T-cell (primary cell): ENCODE measurements at regions of chr17 and their contacts with region 1.

Region 1: DNA sequence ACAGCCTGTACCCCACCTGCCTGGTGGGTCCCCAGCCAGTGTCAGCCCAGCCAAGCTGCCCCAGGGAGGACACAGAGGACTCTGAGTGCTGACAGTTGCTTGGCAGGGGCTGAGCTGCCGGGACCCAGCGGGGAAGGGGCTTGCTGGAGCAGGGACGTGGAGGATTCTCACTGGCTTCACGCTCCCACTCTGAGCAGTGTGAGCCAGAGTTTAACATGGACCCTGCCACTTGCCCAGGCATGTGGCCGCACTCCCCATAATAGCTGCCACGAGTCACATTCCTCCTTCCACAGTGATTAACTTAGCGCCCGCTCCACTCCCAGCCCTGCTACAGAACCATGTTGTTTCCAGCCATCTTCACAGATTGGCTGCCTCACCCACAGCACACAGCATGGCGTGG is 31.2 kb downstream of the SREBF1 start:
- DNase-seq: no peak
- ATAC-seq: no peak
- H3K4me3 ChIP-seq: no peak overlapping the region
- H3K4me3 Mint-ChIP-seq: no peak overlapping the region
- H3K27ac ChIP-seq: no peak overlapping the region
- H3K27ac Mint-ChIP-seq: no peak overlapping the region
- H3K4me1 ChIP-seq: peaks cover 0 to 7% of the 10 kb centered on the region in 2 experiments
- H3K4me1 Mint-ChIP-seq: peaks cover 0 to 4% (median 3%) of the 10 kb centered on the region in 3 donors
- H3K27me3 ChIP-seq: no peaks in the 10 kb centered on the region
- H3K27me3 Mint-ChIP-seq: no peaks in the 10 kb centered on the region

Region 2: GRCh38 chr17:17515934-17516930 is 289.3 kb before region 1 on chr17:
- CTCF ChIA-PET with region 1: no interaction called
- POLR2A ChIA-PET with region 1: no interaction called
- DNase-seq: no peak
- ATAC-seq: no peak
- H3K4me3 ChIP-seq: no peak overlapping the region
- H3K4me3 Mint-ChIP-seq: no peak overlapping the region
- H3K27ac ChIP-seq: no peak overlapping the region
- H3K27ac Mint-ChIP-seq: no peak overlapping the region
- H3K4me1 ChIP-seq: no peaks in the 10 kb centered on the region
- H3K4me1 Mint-ChIP-seq: no peaks in the 10 kb centered on the region
- H3K27me3 ChIP-seq: no peaks in the 10 kb centered on the region
- H3K27me3 Mint-ChIP-seq: no peaks in the 10 kb centered on the region

Region 3: GRCh38 chr17:17781591-17782496 is 23.7 kb before region 1 on chr17:
- CTCF ChIA-PET with region 1: no interaction called
- POLR2A ChIA-PET with region 1: no interaction called
- DNase-seq: peak in 23 of 35 experiments; percentile 18 to 67 (median 35)
- ATAC-seq: peak; percentile 13 to 52 (median 22)
- H3K4me3 ChIP-seq: peak overlapping the region; percentile 33 to 39
- H3K4me3 Mint-ChIP-seq: peak overlapping the region; percentile 57 to 91 (median 63)
- H3K27ac ChIP-seq: no peak overlapping the region
- H3K27ac Mint-ChIP-seq: no peak overlapping the region
- H3K4me1 ChIP-seq: peaks cover 12 to 41% of the 10 kb centered on the region in 2 experiments
- H3K4me1 Mint-ChIP-seq: peaks cover 25 to 28% (median 27%) of the 10 kb centered on the region in 3 donors
- H3K27me3 ChIP-seq: peaks cover 0 to 21% of the 10 kb centered on the region in 2 experiments
- H3K27me3 Mint-ChIP-seq: peaks cover 0 to 3% of the 10 kb centered on the region in 2 donors

Region 4: GRCh38 chr17:17824783-17825614 is 19.4 kb after region 1 on chr17:
- CTCF ChIA-PET with region 1: interaction called in 1 of 2 experiments, 11 read pairs
- POLR2A ChIA-PET with region 1: no interaction called
- DNase-seq: peak in 1 of 35 experiments; percentile 17
- ATAC-seq: no peak
- H3K4me3 ChIP-seq: no peak overlapping the region
- H3K4me3 Mint-ChIP-seq: peak overlapping the region; percentile 28 to 76 (median 51)
- H3K27ac ChIP-seq: peak overlapping the region; percentile 98
- H3K27ac Mint-ChIP-seq: peak overlapping the region; percentile 83 to 90
- H3K4me1 ChIP-seq: peaks cover 49 to 87% of the 10 kb centered on the region in 2 experiments
- H3K4me1 Mint-ChIP-seq: peaks cover 83 to 91% (median 85%) of the 10 kb centered on the region in 3 donors
- H3K27me3 ChIP-seq: no peaks in the 10 kb centered on the region
- H3K27me3 Mint-ChIP-seq: no peaks in the 10 kb centered on the region